GM23248 (cell line): ENCODE measurements at regions of chr22 and their contacts with region 1.

Region 1: GRCh38 chr22:21629262-21630149 is at the start of gene YDJC:
- DNase-seq: peak; percentile 97
- H3K4me3 ChIP-seq: peak within 1 kb of the TSS; percentile 83
- H3K27ac ChIP-seq: peak within 1 kb of the TSS; percentile 15; the same call in 1 of the 2 replicates
- H3K4me1 ChIP-seq: no peaks in the 10 kb centered on the region
- H3K27me3 ChIP-seq: no peaks in the 10 kb centered on the region
- total RNA-seq, gene YDJC: 27.1 and 31.5 TPM in 2 replicates

Region 2: DNA sequence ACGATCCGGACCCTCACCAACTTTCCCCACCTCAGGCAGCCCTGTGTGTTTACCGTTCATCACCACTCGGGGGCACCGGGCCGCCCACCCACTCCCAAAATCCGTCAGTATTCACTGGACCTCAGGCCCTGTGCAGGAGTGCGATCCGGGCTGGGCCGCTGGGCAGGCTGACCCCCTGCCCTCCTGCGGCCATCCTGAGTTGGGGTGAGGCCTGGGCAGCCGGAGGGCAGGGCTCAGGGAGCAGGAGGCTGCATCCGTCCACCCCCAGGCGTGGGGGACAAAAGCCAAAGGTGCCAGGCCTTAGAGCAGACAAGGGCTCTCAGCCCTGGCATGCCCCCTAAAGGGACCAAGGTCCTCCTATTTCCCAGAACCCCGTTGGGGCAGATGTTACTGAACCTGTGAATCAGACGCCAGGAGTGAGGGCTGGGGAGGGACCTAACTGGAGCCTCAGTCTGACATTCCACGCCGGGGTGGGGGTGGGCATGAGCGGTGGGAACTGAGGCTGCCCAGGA is 179.1 kb before region 1 on chr22:
- in situ Hi-C with region 1: loop called (anchors 25 kb)
- DNase-seq: no peak
- H3K4me3 ChIP-seq: no peak overlapping the region
- H3K27ac ChIP-seq: no peak overlapping the region
- H3K4me1 ChIP-seq: no peaks in the 10 kb centered on the region
- H3K27me3 ChIP-seq: no peaks in the 10 kb centered on the region